IMR-90 (cell line): ENCODE measurements at regions of chr14 and their contacts with region 1.

Region 1: GRCh38 chr14:63641473-63642228 is at the start of gene WDR89:
- DNase-seq: peak; percentile 100
- ATAC-seq: peak; percentile 95
- H3K4me3 ChIP-seq: peak within 1 kb of the TSS; percentile 77
- H3K27ac ChIP-seq: peak within 1 kb of the TSS; percentile 71
- H3K4me1 ChIP-seq: no peaks in the 10 kb centered on the region
- H3K27me3 ChIP-seq: no peaks in the 10 kb centered on the region
- CTCF ChIP-seq: peak; percentile 66
- POLR2A ChIP-seq: peak; percentile 65; the same call in 1 of the 2 replicates
- RAD21 ChIP-seq: peak; percentile 51
- total RNA-seq, gene WDR89: 10.2 and 22.5 TPM in 2 replicates

Region 2: GRCh38 chr14:63770187-63770807 is 128.6 kb after region 1 on chr14:
- CTCF ChIA-PET with region 1: interaction called, 5 read pairs
- POLR2A ChIA-PET with region 1: no interaction called
- dilution Hi-C with region 1: no loop called
- in situ Hi-C with region 1: no loop called
- intact Hi-C with region 1: loop called (anchors 2 kb)
- DNase-seq: peak; percentile 62
- ATAC-seq: peak; percentile 94
- H3K4me3 ChIP-seq: no peak overlapping the region
- H3K27ac ChIP-seq: no peak overlapping the region
- H3K4me1 ChIP-seq: peaks cover 3% of the 10 kb centered on the region; the same call in 1 of the 2 replicates
- H3K27me3 ChIP-seq: no peaks in the 10 kb centered on the region; the same call in 1 of the 2 replicates
- CTCF ChIP-seq: peak; percentile 70
- POLR2A ChIP-seq: no peak
- RAD21 ChIP-seq: peak; percentile 66